Pancreas (tissue), 10 donors: ENCODE measurements at regions of chr1 and their contacts with region 1.

Region 1: DNA sequence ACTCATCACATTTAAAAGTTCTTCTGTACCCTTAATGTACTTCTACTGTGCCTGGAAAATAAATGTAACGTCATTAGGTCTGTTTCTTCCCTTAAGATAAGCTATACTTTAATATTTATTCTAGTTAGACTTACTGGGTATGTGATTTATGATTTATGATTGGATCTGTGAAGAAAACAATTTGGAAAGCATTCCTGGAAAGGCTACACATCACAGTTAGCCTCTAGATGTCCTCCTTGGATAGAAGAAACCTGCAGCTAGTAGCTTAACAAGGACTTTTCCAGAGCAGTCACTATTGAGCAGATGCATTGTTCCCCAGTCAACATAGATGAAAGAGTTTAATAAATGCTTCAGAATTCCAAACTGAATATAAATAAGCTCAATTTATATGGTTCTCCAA is 22.2 kb upstream of the ABL2 start:
- DNase-seq: peak in 2 of 6 donors; percentile 5 to 19
- ATAC-seq: peak; percentile 87 to 100 (median 98)
- H3K4me3 ChIP-seq: no peak overlapping the region
- H3K27ac ChIP-seq: no peak overlapping the region
- H3K4me1 ChIP-seq: no peaks in the 10 kb centered on the region
- H3K27me3 ChIP-seq: no peaks in the 10 kb centered on the region
- CTCF ChIP-seq: peak in 3 of 4 donors; percentile 23 to 39 (median 27)

Region 2: GRCh38 chr1:179599623-179600249 is 348.1 kb after region 1 on chr1:
- intact Hi-C with region 1: loop called in 1 of 3 experiments (anchors 10 kb)
- DNase-seq: no peak
- ATAC-seq: peak; percentile 58 to 87 (median 78)
- H3K4me3 ChIP-seq: no peak overlapping the region
- H3K27ac ChIP-seq: no peak overlapping the region
- H3K4me1 ChIP-seq: no peaks in the 10 kb centered on the region
- H3K27me3 ChIP-seq: no peaks in the 10 kb centered on the region
- CTCF ChIP-seq: peak in 2 of 4 donors; percentile 13 to 27